ENCODE measurements at regions of chr19 and their contacts with region 1.

Region 1: DNA sequence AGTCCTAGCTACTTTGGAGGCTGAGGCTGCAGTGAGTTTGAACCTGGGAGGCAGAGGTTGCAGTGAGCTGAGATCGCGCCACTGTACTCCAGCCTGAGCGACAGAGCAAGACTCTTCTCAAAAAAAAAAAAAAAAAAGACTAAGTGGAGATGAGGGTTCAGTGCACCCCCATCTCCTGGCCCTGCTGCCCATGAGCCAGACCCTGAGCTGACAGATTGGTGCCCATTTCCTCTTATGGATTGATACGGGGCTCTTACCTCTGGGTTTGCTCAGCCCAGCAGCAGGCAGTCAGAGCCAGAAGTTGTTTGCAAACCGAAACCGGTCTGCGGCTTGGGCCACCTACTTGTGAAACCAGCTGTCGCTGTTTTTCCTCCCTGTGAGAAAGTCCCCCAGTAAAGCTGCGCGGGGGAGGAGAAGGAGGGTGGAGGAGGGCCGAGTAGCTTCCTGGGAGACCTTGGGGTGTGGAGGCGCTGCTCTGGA is 36.9 kb downstream of the ARRDC2 start:
- DNase-seq: peak; percentile 88
- H3K4me3 Mint-ChIP-seq: peak overlapping the region; percentile 59
- H3K27ac Mint-ChIP-seq: peak overlapping the region; percentile 93
- H3K4me1 Mint-ChIP-seq: peaks cover 46% of the 10 kb centered on the region
- H3K27me3 Mint-ChIP-seq: peaks cover 3% of the 10 kb centered on the region

Region 2: DNA sequence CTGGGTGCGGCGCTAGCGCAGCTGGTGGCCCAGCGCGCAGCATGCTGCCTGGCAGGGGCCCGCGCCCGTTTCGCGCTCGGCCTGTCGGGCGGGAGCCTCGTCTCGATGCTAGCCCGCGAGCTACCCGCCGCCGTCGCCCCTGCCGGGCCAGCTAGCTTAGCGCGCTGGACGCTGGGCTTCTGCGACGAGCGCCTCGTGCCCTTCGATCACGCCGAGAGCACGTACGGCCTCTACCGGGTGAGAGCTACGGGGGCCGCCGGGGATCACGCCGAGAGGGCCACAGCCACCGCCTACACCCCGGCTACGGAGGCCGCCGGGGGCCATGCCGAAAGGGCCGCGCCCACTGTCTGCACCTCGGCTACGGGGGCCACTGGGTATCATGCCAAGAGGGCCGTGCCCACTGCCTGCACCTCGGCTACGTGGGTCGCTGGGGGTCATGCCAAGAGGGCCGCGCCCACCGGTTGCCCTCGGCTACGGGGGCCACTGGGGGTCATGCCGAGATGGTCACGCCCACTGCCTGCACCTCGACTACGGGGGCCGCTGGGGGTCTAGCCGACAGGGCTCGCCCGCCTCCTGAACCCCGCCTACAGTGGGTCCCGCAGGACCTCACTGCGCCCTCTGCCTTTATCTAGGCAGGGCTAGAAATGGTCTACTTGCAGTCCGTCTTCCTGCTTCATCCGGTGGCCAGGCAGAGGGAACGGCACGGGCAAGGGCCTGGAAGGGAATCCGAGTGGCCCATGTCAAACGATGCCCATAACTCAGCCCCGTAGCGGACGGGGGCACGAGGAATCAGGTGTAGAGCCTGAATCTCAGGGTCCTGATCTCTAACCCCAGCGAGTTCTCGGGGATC is 532.9 kb before region 1 on chr19:
- intact Hi-C with region 1: no loop called
- DNase-seq: peak; percentile 75
- H3K4me3 Mint-ChIP-seq: peak overlapping the region; percentile 99
- H3K27ac Mint-ChIP-seq: peak overlapping the region; percentile 79
- H3K4me1 Mint-ChIP-seq: peaks cover 28% of the 10 kb centered on the region
- H3K27me3 Mint-ChIP-seq: no peaks in the 10 kb centered on the region

Region 3: GRCh38 chr19:18021121-18021755 is 23.6 kb before region 1 on chr19:
- intact Hi-C with region 1: loop called (anchors 1 kb)
- DNase-seq: peak; percentile 50
- H3K4me3 Mint-ChIP-seq: peak overlapping the region; percentile 75
- H3K27ac Mint-ChIP-seq: peak overlapping the region; percentile 95
- H3K4me1 Mint-ChIP-seq: peaks cover 68% of the 10 kb centered on the region
- H3K27me3 Mint-ChIP-seq: no peaks in the 10 kb centered on the region

Region 4: DNA sequence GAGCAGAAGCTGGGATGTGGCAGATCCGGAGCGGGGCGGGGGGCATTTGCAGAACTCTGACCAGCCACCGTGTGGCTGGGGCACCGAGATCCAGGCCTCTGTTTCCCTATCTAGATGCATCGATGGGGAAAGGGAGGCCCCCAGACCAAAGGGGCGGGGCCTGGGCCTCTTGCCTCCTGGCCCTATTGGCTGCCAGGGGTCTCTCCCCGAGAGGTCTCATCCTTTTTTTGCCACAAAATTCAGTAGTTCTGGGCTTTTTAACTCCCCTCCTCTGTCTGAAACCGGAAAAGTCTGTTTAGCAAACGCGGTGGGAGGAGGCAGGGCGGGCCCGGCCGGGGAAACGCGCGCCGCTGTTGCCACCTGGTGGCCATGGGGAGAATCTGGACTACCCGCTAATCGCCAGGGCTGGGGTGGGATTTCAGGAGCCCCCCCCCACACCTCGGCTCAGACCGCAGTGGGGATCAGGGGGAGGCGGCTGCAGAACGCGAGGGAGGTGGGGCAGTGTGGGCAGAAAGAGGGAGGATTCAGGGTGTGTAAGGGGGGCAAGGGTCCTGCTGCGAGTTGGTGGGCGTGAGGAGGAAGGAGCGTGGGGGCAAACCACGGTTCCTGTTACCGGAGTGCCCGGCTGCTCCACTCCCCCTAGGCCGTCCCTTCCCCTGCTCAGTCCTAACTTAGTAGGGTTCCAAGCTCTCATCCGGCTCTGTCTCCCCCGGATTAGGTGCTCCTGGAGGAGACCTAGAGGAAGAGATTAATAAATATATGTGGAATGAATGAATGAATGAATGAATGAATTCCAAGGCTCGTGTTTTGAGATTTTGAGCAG is 13.6 kb after region 1 on chr19:
- intact Hi-C with region 1: loop called (anchors 1 kb)
- DNase-seq: peak; percentile 74
- H3K4me3 Mint-ChIP-seq: no peak overlapping the region
- H3K27ac Mint-ChIP-seq: peak overlapping the region; percentile 52
- H3K4me1 Mint-ChIP-seq: peaks cover 17% of the 10 kb centered on the region
- H3K27me3 Mint-ChIP-seq: no peaks in the 10 kb centered on the region

Region 5: GRCh38 chr19:18086590-18087138 is 41.8 kb after region 1 on chr19 and contains the start of gene IL12RB1:
- intact Hi-C with region 1: loop called (anchors 1 kb)
- DNase-seq: peak; percentile 75
- H3K4me3 Mint-ChIP-seq: peak within 1 kb of the TSS; percentile 97
- H3K27ac Mint-ChIP-seq: peak within 1 kb of the TSS; percentile 99
- H3K4me1 Mint-ChIP-seq: peaks cover 60% of the 10 kb centered on the region
- H3K27me3 Mint-ChIP-seq: no peaks in the 10 kb centered on the region
- total RNA-seq, gene IL12RB1: 44.5 and 47.5 TPM in 2 replicates